Activated naive CD4-positive, alpha-beta T cell treated with anti-CD3 and anti-CD28 coated beads for 36 hours (primary cell): ENCODE measurements at regions of chr11 and their contacts with region 1.

Region 1: DNA sequence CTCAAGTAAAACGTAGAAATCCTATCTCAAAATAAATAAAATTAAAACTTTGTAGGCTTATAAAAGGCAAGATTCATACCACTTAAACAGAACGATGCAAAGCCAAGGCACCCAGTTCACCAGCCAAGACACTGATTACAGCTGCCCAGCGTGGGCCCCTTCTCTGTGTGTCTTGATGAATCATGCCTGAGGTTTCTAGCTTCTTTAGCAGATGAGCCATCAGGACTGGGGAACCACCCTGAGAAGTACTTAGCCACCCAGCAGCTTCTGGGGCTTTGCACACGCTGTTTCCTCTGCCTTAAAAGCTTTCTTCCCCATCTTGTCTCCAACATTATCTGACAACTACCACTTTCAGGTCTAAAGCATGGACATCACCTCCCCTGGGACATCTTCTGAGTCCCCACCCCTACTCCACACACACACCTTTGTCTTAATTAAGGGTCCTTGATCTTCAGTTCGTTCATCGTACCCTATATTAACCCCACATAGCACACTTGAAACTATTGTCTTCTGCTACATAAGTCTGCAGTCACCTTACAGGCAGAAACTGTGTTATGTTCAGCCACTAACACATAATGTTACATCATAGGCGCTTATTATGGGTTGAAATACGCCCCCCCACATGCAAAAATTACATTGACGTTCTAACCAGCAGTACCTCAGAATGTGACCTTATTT is 8.7 kb upstream of the LAYN start:
- DNase-seq: peak; percentile 88
- H3K4me3 Mint-ChIP-seq: no peak overlapping the region
- H3K27ac Mint-ChIP-seq: peak overlapping the region; percentile 82
- H3K4me1 Mint-ChIP-seq: peaks cover 47% of the 10 kb centered on the region
- H3K27me3 Mint-ChIP-seq: peaks cover 16% of the 10 kb centered on the region

Region 2: DNA sequence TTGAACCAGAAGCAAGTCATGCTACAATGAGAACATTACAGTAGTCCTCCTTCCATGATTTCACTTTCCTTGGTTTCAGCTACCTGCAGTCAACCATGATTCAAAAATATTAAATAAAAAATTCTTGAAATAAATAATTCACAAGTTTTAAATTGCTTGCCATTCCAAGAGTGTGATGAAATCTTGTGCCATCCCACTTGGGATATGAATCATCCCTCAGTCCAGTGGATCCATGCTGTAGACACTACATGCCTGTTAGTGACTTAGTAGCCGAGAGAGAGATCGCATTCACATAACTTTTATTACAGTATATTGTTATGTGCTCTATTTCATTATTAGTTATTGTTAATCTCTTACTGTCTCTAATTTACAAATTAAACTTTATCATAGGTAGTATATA is 11.3 kb before region 1 on chr11:
- CTCF ChIA-PET with region 1: no interaction called
- intact Hi-C with region 1: loop called (anchors 1 kb)
- DNase-seq: no peak
- H3K4me3 Mint-ChIP-seq: no peak overlapping the region
- H3K27ac Mint-ChIP-seq: peak overlapping the region; percentile 16
- H3K4me1 Mint-ChIP-seq: peaks cover 42% of the 10 kb centered on the region
- H3K27me3 Mint-ChIP-seq: peaks cover 3% of the 10 kb centered on the region